GM10248 (cell line): ENCODE measurements at regions of chr10 and their contacts with region 1.

Region 1: GRCh38 chr10:88728107-88728763 is 22.2 kb downstream of the LIPK start:
- DNase-seq: no peak
- CTCF ChIP-seq: no peak

Region 2: DNA sequence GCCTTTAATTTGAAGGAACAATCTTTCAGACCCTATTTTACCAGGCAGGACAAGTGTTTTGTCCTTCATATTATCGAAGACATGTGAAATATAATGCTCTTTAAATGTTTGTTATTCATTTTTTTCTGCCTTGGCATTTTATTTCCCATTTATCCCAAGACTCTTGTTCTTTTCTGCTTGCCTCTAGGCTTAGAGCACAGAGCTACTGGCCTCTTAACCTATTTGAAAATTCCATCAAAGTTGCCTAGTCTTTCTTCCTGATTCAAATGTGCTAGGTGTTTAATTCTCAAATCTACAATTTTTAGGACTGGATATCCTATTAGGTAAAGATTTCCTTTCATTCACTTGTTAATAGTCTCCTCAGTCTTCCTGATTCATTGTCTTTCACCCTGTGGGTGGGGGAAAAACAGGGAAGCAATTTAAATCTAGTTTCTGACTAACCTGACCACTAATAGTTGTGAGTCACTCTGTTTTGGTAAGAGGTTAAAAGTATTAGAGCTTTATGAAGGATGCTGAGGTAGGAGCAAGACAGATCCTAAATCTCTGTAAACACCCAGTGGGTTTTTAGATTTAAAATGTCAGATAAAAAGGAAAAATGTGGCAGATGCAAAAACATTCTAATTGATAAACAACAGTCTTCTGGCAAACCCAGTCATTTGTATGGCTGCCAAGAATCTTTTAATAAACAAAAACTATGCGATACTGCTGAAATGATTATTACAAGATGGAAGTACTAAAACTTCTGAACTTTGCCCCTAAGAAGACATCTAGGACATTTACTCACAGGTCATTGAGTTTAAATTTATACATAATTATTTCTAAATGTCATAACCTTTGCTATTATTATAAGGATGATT is 20.6 kb before region 1 on chr10:
- CTCF ChIA-PET with region 1: interaction called, 11 read pairs
- POLR2A ChIA-PET with region 1: no interaction called
- DNase-seq: no peak
- CTCF ChIP-seq: no peak